Upper lobe of right lung (tissue), 1 donor: ENCODE measurements at regions of chr14 and their contacts with region 1.

Region 1: GRCh38 chr14:23562268-23563203 is 5.1 kb downstream of the AP1G2 start:
- DNase-seq: peak; percentile 54
- ATAC-seq: peak; percentile 46
- H3K4me3 ChIP-seq: no peak overlapping the region
- H3K27ac ChIP-seq: no peak overlapping the region
- H3K4me1 ChIP-seq: peaks cover 9% of the 10 kb centered on the region
- H3K27me3 ChIP-seq: no peaks in the 10 kb centered on the region
- CTCF ChIP-seq: peak; percentile 93

Region 2: DNA sequence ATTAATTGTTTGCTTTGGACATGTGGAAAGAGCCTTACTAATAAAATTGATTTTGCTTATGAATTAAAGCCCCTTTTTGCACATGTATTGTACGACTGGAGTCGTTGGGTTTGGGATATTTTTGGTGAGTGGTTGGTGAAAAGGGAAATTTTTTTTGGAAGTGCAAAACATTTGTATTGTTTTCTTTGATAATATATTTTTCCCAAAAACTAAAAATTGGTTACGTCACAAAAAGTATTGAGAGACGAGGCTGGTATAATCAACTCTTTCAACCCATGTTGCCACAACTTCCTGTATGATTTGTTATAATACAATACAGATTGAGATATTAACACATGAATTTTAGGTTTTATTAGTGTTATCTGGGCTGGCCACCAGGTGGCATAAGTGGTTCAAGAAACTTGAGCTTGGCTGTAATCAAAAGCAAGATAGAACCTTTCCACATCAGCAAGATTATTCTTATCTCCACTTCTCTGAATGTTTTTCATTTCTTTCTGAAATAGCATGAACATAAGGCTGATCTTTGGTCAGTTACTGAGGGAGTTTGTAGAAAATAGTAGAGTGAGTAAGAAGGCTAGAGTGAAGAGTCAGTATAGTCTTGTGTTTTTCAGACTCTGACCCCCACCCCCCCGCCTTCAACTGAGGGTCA is 84.3 kb before region 1 on chr14:
- intact Hi-C with region 1: loop called (anchors 5 kb)
- DNase-seq: no peak
- ATAC-seq: peak; percentile 81
- H3K4me3 ChIP-seq: no peak overlapping the region
- H3K27ac ChIP-seq: no peak overlapping the region
- H3K4me1 ChIP-seq: no peaks in the 10 kb centered on the region
- H3K27me3 ChIP-seq: no peaks in the 10 kb centered on the region
- CTCF ChIP-seq: peak; percentile 71

Region 3: DNA sequence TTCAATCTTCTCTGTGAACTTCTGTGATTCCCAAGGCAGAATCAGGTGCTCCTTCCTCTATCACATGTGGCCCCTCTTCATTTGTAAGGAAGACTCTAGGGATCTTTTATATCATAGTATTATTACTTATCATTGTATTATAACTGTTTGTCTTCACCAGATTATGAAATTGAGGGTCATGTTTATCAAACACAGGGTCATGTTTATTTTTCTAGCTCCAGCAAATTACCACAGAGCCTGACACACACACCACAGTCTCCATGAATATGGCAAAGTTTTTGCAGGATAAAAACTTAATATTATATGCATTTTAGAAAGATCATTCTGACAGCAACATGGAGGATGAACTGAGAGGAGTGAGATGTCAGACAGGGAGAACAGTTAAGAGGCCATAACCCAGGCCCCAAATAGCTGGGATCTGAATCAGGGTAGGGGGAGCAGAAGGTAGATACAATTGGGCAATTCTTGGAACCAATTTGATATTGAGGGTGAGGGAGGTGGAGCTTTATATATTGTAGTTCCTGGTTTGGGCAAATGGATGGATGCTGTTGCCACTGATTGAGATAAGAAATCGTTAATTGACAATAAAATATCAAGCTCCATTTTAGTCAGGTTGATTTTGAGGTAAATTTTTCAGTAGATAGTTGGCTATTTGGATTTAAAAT is 204.3 kb after region 1 on chr14:
- intact Hi-C with region 1: no loop called
- DNase-seq: no peak
- ATAC-seq: no peak
- H3K4me3 ChIP-seq: no peak overlapping the region
- H3K27ac ChIP-seq: no peak overlapping the region
- H3K4me1 ChIP-seq: no peaks in the 10 kb centered on the region
- H3K27me3 ChIP-seq: no peaks in the 10 kb centered on the region
- CTCF ChIP-seq: no peak